ENCODE measurements at regions of chr7 and their contacts with region 1.

Region 1: GRCh38 chr7:149381245-149381644 is 79.6 kb downstream of the ZNF777 start:
- DNase-seq: peak in 1 of 2 experiments; percentile 53
- H3K4me3 ChIP-seq: no peak overlapping the region
- H3K27ac ChIP-seq: no peak overlapping the region
- H3K4me1 ChIP-seq: peaks cover 12% of the 10 kb centered on the region
- H3K27me3 ChIP-seq: no peaks in the 10 kb centered on the region
- CTCF ChIP-seq: peak; percentile 63

Region 2: GRCh38 chr7:149310113-149310836 is 71.0 kb before region 1 on chr7:
- CTCF ChIA-PET with region 1: no interaction called
- POLR2A ChIA-PET with region 1: no interaction called
- intact Hi-C with region 1: loop called (anchors 1 kb)
- DNase-seq: peak; percentile 36 to 78
- H3K4me3 ChIP-seq: no peak overlapping the region
- H3K27ac ChIP-seq: no peak overlapping the region
- H3K4me1 ChIP-seq: no peaks in the 10 kb centered on the region
- H3K27me3 ChIP-seq: no peaks in the 10 kb centered on the region
- CTCF ChIP-seq: peak; percentile 77

Region 3: DNA sequence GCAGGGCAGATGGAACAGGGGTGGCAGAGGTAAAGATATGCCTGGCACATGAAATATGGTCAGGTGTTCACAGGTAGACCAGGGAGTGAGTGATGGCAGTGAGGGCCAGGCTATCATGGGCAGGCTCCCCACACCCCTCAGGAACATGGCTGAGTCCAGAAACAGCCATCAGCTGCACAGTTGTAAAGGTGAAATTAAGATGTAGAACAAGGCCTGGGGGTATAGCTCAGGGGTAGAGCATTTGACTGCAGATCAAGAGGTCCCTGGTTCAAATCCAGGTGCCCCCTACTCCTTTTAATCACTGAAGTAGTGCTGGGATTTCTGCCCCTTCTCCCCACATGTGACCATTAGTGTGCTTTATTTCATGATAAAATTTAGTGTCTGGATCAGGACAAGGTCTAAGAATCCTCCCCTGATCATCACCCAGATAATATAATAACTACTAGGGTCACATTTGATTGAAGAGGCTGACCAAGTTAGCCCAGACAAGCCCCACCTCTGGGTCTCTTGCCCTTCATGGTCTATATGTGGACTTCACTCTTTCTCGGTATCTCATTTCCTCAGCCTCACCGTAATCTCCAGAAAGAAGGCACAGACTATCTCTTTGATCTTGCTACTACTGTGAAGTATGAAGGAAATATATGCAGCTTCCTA is 50.2 kb before region 1 on chr7:
- CTCF ChIA-PET with region 1: interaction called, 3 read pairs
- POLR2A ChIA-PET with region 1: no interaction called
- intact Hi-C with region 1: loop called (anchors 2 kb)
- DNase-seq: peak; percentile 44 to 53
- H3K4me3 ChIP-seq: no peak overlapping the region
- H3K27ac ChIP-seq: no peak overlapping the region
- H3K4me1 ChIP-seq: peaks cover 12% of the 10 kb centered on the region
- H3K27me3 ChIP-seq: no peaks in the 10 kb centered on the region
- CTCF ChIP-seq: no peak

Region 4: GRCh38 chr7:149369508-149369907 is 11.7 kb before region 1 on chr7:
- CTCF ChIA-PET with region 1: no interaction called
- POLR2A ChIA-PET with region 1: no interaction called
- intact Hi-C with region 1: loop called (anchors 2 kb)
- DNase-seq: peak; percentile 65 to 98
- H3K4me3 ChIP-seq: peak overlapping the region; percentile 31; the same call in 1 of the 2 replicates
- H3K27ac ChIP-seq: peak overlapping the region; percentile 41
- H3K4me1 ChIP-seq: peaks cover 41% of the 10 kb centered on the region
- H3K27me3 ChIP-seq: no peaks in the 10 kb centered on the region
- CTCF ChIP-seq: no peak